Dendritic cell treated with granulocyte-macrophage colony-stimulating factor and Interleukin-4, amounts not matched to agents 40 ng/mL and 50 ng/mL, for 4 days (primary cell): ENCODE measurements at regions of chr13 and their contacts with region 1.

Region 1: GRCh38 chr13:49641801-49642291 is 13.5 kb downstream of the ARL11 start:
- H3K4me3 Mint-ChIP-seq: peak overlapping the region; percentile 93
- H3K27ac Mint-ChIP-seq: peak overlapping the region; percentile 99
- H3K4me1 Mint-ChIP-seq: peaks cover 65% of the 10 kb centered on the region
- H3K27me3 Mint-ChIP-seq: no peaks in the 10 kb centered on the region

Region 2: GRCh38 chr13:49690992-49691886 is 49.4 kb after region 1 on chr13 and contains the start of gene EBPL:
- intact Hi-C with region 1: loop called (anchors 5 kb)
- H3K4me3 Mint-ChIP-seq: peak within 1 kb of the TSS; percentile 79
- H3K27ac Mint-ChIP-seq: peak within 1 kb of the TSS; percentile 56
- H3K4me1 Mint-ChIP-seq: peaks cover 35% of the 10 kb centered on the region
- H3K27me3 Mint-ChIP-seq: peaks cover 1% of the 10 kb centered on the region